ENCODE measurements at regions of chr16 and their contacts with region 1.

Region 1: DNA sequence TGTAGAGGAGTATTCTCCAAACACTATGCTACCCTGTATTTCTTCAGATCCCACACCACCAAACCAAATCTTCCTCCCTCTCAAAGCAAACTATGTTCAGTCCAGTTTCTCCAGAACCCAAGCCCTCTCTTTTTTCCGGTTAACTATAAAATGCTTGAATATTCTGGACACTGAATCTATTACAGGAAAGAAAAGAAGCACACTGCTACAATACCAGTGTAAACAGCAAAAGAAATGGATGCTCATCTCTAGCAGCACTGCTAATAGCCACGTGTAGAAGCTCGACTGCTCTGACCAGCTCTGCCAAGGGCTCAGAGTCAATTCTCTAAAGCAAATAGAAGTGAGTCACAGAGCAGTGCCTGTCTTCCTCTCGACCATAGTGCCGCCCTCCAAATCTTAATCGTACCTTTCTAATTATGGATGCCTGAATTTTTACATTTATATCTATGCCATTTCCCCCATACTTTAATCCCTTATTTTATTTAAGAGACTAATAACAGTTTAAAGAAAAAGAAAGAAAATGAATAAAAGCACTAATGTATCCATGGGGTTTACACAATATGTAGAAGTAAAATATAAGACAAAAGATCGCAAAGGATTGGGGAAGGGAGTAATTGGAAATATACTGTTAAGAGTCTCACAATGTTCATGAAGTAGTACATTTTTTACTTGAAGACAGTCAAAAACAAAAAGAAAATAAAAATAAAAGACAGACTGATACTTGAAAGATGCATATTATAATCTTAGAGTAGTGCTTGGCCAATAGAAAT is 154.5 kb downstream of the PARN start:
- DNase-seq: peak; percentile 41 to 81
- H3K4me3 ChIP-seq: peak overlapping the region; percentile 34; the same call in 1 of the 2 replicates
- H3K27ac ChIP-seq: peak overlapping the region; percentile 72
- H3K4me1 ChIP-seq: peaks cover 26% of the 10 kb centered on the region
- H3K27me3 ChIP-seq: no peaks in the 10 kb centered on the region
- CTCF ChIP-seq: no peak

Region 2: DNA sequence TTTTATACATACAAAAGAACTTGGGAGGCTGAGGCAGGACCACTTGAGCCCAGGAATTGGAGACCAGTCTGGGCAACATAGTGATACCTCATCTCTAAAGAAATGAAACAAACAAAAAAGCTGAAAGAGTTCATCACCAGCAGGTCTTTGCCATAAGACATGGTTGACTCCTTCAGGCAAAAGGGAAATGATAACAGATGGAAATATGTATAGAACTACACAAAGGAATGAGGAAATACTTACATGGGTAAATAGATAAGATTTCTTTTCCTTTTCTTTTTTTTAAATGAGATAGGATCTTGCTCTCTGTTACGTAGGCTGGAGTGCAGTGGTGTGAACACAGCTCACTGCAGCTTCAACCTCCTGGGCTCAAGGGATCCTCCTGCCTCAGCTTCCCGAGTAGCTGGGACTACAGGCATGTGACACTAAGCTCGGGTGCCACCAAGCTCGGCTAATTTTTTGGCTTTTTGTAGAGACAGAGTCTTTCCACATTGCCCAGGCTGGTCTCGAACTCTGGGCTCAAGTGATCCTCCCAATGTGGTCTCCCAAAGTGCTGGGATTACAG is 10.7 kb before region 1 on chr16:
- CTCF ChIA-PET with region 1: no interaction called
- POLR2A ChIA-PET with region 1: interaction called, 22 read pairs
- intact Hi-C with region 1: no loop called
- DNase-seq: peak in 1 of 2 experiments; percentile 51
- H3K4me3 ChIP-seq: no peak overlapping the region
- H3K27ac ChIP-seq: no peak overlapping the region
- H3K4me1 ChIP-seq: 0 out of 2 replicates have a peak, but pooled peaks cover 5% of the 10 kb centered on the region
- H3K27me3 ChIP-seq: no peaks in the 10 kb centered on the region
- CTCF ChIP-seq: no peak

Region 3: GRCh38 chr16:14510939-14511799 is 35.6 kb after region 1 on chr16:
- CTCF ChIA-PET with region 1: no interaction called
- POLR2A ChIA-PET with region 1: no interaction called
- intact Hi-C with region 1: no loop called
- DNase-seq: no peak
- H3K4me3 ChIP-seq: no peak overlapping the region
- H3K27ac ChIP-seq: peak overlapping the region; percentile 36; the same call in 1 of the 2 replicates
- H3K4me1 ChIP-seq: peaks cover 19% of the 10 kb centered on the region
- H3K27me3 ChIP-seq: no peaks in the 10 kb centered on the region
- CTCF ChIP-seq: no peak

Measured in PC-9 (cell line).